T-cell (primary cell): ENCODE measurements at regions of chr4 and their contacts with region 1.

Region 1: DNA sequence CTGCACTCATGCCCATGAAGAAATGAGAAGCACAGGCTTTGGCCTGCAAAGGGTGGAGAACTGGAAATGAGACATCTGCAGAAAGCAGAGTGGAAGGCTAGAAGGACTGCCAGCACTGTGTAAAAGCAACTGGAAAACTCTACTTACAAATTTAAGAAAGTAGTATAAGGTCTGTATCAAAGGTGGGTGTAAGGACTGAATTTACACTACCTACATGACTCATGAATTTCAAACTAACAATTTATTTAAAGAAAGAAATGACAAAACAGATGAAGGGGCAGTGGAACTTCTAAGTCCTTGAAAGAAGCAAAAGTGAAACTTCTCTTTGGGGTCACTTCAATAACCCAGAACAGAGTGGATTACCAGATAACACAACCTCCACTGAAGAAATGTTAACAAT is 71.2 kb downstream of the SLC10A7 start:
- DNase-seq: no peak
- ATAC-seq: no peak
- H3K4me3 ChIP-seq: no peak overlapping the region
- H3K4me3 Mint-ChIP-seq: peak overlapping the region in 1 of 3 donors; percentile 8
- H3K27ac ChIP-seq: no peak overlapping the region
- H3K27ac Mint-ChIP-seq: peak overlapping the region; percentile 20 to 34
- H3K4me1 ChIP-seq: peaks cover 0 to 4% of the 10 kb centered on the region in 2 experiments
- H3K4me1 Mint-ChIP-seq: peaks cover 30 to 48% (median 32%) of the 10 kb centered on the region in 3 donors
- H3K27me3 ChIP-seq: no peaks in the 10 kb centered on the region
- H3K27me3 Mint-ChIP-seq: no peaks in the 10 kb centered on the region

Region 2: DNA sequence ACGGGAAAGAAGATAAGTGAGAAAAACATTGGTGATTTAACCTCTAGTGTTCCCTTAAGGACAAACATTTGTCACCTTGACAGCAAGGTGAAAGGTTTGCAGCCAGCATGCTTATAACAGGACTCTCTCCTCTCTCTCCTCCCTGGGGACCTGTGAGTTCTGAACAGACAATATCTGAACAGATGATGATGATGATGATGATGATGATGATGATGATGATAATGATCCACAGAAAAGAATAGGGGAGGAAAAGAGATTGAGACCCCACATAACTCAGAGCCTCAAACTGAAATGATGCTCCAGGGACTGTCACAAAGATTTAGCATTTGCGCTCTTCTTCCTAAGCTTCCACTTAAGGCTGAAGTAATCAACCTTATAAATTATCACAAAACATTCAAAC is 32.7 kb before region 1 on chr4:
- CTCF ChIA-PET with region 1: no interaction called
- POLR2A ChIA-PET with region 1: no interaction called
- DNase-seq: no peak
- ATAC-seq: no peak
- H3K4me3 ChIP-seq: no peak overlapping the region
- H3K4me3 Mint-ChIP-seq: no peak overlapping the region
- H3K27ac ChIP-seq: no peak overlapping the region
- H3K27ac Mint-ChIP-seq: no peak overlapping the region
- H3K4me1 ChIP-seq: no peaks in the 10 kb centered on the region
- H3K4me1 Mint-ChIP-seq: no peaks in the 10 kb centered on the region
- H3K27me3 ChIP-seq: no peaks in the 10 kb centered on the region
- H3K27me3 Mint-ChIP-seq: no peaks in the 10 kb centered on the region

Region 3: GRCh38 chr4:146465628-146466027 is 15.1 kb after region 1 on chr4:
- CTCF ChIA-PET with region 1: no interaction called
- POLR2A ChIA-PET with region 1: interaction called, 14 to 26 read pairs
- DNase-seq: no peak
- ATAC-seq: no peak
- H3K4me3 ChIP-seq: no peak overlapping the region
- H3K4me3 Mint-ChIP-seq: no peak overlapping the region
- H3K27ac ChIP-seq: no peak overlapping the region
- H3K27ac Mint-ChIP-seq: no peak overlapping the region
- H3K4me1 ChIP-seq: no peaks in the 10 kb centered on the region
- H3K4me1 Mint-ChIP-seq: peaks cover 5 to 6% (median 6%) of the 10 kb centered on the region in 3 donors
- H3K27me3 ChIP-seq: no peaks in the 10 kb centered on the region
- H3K27me3 Mint-ChIP-seq: no peaks in the 10 kb centered on the region

Region 4: GRCh38 chr4:146472404-146472803 is 21.9 kb after region 1 on chr4:
- CTCF ChIA-PET with region 1: no interaction called
- POLR2A ChIA-PET with region 1: interaction called in 1 of 2 experiments, 26 read pairs
- DNase-seq: no peak
- ATAC-seq: no peak
- H3K4me3 ChIP-seq: no peak overlapping the region
- H3K4me3 Mint-ChIP-seq: no peak overlapping the region
- H3K27ac ChIP-seq: no peak overlapping the region
- H3K27ac Mint-ChIP-seq: no peak overlapping the region
- H3K4me1 ChIP-seq: no peaks in the 10 kb centered on the region
- H3K4me1 Mint-ChIP-seq: peaks cover 0 to 10% (median 0%) of the 10 kb centered on the region in 3 donors
- H3K27me3 ChIP-seq: no peaks in the 10 kb centered on the region
- H3K27me3 Mint-ChIP-seq: no peaks in the 10 kb centered on the region

Region 5: GRCh38 chr4:148090503-148091476 is 1640.3 kb after region 1 on chr4:
- CTCF ChIA-PET with region 1: no interaction called
- POLR2A ChIA-PET with region 1: no interaction called
- DNase-seq: no peak
- ATAC-seq: no peak
- H3K4me3 ChIP-seq: no peak overlapping the region
- H3K4me3 Mint-ChIP-seq: no peak overlapping the region
- H3K27ac ChIP-seq: no peak overlapping the region
- H3K27ac Mint-ChIP-seq: peak overlapping the region in 1 of 2 donors; percentile 50
- H3K4me1 ChIP-seq: no peaks in the 10 kb centered on the region
- H3K4me1 Mint-ChIP-seq: peaks cover 24 to 40% (median 34%) of the 10 kb centered on the region in 3 donors
- H3K27me3 ChIP-seq: no peaks in the 10 kb centered on the region
- H3K27me3 Mint-ChIP-seq: no peaks in the 10 kb centered on the region